ENCODE measurements at regions of chr10 and their contacts with region 1.

Region 1: DNA sequence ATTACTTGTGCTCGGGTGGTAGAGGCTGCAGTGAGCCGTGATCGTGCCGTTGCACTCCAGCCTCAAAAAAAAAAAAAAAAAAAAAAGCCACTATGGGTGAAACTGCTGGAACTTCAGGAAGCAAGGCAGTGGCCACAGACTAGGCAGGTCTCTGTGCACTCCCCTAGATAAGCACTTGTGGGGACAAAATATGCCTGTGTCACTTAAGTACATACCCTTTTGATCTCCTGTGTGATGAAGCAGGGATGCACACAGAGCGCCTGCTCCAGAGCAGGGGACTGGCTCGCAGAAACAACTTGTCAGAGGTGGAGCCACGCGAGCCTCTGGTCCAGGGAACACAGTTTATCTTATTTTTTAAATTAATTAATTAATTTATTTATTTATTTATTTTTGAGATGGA is 42.9 kb upstream of the PSAP start:
- DNase-seq: no peak
- H3K4me3 ChIP-seq: no peak overlapping the region
- H3K27ac ChIP-seq: no peak overlapping the region
- H3K4me1 ChIP-seq: peaks cover 0 to 3% of the 10 kb centered on the region in 2 experiments; a peak in 1 of 4 replicates
- H3K27me3 ChIP-seq: no peaks in the 10 kb centered on the region
- CTCF ChIP-seq: no peak
- EP300 ChIP-seq: no peak
- RAD21 ChIP-seq: no peak

Region 2: GRCh38 chr10:71173466-71173865 is 720.5 kb before region 1 on chr10:
- CTCF ChIA-PET with region 1: no interaction called
- POLR2A ChIA-PET with region 1: no interaction called
- DNase-seq: no peak
- H3K4me3 ChIP-seq: no peak overlapping the region
- H3K27ac ChIP-seq: no peak overlapping the region
- H3K4me1 ChIP-seq: no peaks in the 10 kb centered on the region; a peak in 1 of 4 replicates
- H3K27me3 ChIP-seq: peaks cover 16% of the 10 kb centered on the region; the same call in 1 of the 2 replicates
- CTCF ChIP-seq: no peak
- EP300 ChIP-seq: no peak
- RAD21 ChIP-seq: no peak

Region 3: GRCh38 chr10:71742301-71743088 is 151.4 kb before region 1 on chr10:
- CTCF ChIA-PET with region 1: interaction called, 10 read pairs
- POLR2A ChIA-PET with region 1: no interaction called
- DNase-seq: no peak
- H3K4me3 ChIP-seq: no peak overlapping the region
- H3K27ac ChIP-seq: no peak overlapping the region
- H3K4me1 ChIP-seq: peaks cover 0 to 33% of the 10 kb centered on the region in 2 experiments; a peak in 1 of 4 replicates
- H3K27me3 ChIP-seq: no peaks in the 10 kb centered on the region
- CTCF ChIP-seq: no peak
- EP300 ChIP-seq: no peak
- RAD21 ChIP-seq: no peak

Region 4: DNA sequence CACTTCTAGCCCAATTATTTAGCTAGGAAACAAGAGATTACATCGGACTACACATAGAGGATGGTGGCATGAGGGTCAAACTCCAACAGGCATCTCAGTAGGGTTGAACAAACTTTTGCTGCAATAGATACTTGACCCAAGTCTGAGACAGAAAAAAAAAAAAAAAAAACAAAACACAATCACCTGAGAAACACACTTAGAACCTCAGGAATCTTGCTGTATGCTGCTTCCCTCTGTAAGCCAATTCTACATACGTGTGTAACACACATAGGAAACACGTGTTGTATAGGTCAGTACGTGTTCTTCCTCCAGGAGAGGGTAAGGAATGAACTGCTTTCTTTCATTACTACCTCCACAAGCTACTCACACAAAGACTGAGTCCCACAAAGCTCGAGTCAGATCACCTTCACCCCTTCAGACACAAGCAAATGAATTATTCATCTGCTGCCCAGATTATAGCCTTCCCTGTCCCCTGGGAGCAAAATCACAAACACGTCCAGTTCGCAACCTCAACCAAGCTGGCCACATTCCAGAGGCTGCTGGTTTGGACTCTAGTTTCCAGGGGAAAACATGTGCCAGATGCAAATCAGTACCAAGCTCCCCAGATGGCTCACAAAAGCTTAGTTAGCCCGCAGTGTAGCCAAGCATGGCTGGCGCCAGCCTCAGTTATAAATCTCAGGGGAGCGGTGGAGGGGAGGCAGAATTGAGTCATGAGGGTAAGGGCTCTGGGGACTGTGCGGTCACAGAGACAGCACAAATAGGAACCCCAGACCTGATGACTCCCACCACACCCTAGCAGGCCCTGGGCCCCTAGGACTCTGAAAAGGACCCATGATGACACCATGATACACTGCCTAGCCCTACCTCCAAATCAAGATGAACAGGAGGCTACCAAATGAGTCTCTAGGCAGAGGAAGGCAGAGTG is 58.0 kb before region 1 on chr10:
- CTCF ChIA-PET with region 1: interaction called, 65 read pairs
- POLR2A ChIA-PET with region 1: no interaction called
- DNase-seq: peak; percentile 85
- H3K4me3 ChIP-seq: no peak overlapping the region
- H3K27ac ChIP-seq: peak overlapping the region; percentile 69 to 94
- H3K4me1 ChIP-seq: peaks cover 48 to 49% of the 10 kb centered on the region in 2 experiments
- H3K27me3 ChIP-seq: no peaks in the 10 kb centered on the region
- CTCF ChIP-seq: no peak
- EP300 ChIP-seq: peak; percentile 32 to 77; a peak in 2 of 4 replicates
- RAD21 ChIP-seq: peak; percentile 26; the same call in 1 of the 2 replicates

Region 5: GRCh38 chr10:71909399-71910083 is 15.6 kb after region 1 on chr10:
- CTCF ChIA-PET with region 1: interaction called, 28 read pairs
- POLR2A ChIA-PET with region 1: no interaction called
- DNase-seq: no peak
- H3K4me3 ChIP-seq: no peak overlapping the region
- H3K27ac ChIP-seq: no peak overlapping the region
- H3K4me1 ChIP-seq: no peaks in the 10 kb centered on the region
- H3K27me3 ChIP-seq: no peaks in the 10 kb centered on the region
- CTCF ChIP-seq: no peak
- EP300 ChIP-seq: no peak
- RAD21 ChIP-seq: no peak

Region 6: GRCh38 chr10:71999360-72000072 is 105.6 kb after region 1 on chr10:
- CTCF ChIA-PET with region 1: interaction called, 19 read pairs
- POLR2A ChIA-PET with region 1: interaction called, 4 read pairs
- DNase-seq: peak; percentile 91
- H3K4me3 ChIP-seq: no peak overlapping the region
- H3K27ac ChIP-seq: peak overlapping the region; percentile 80 to 90
- H3K4me1 ChIP-seq: peaks cover 19 to 38% of the 10 kb centered on the region in 2 experiments
- H3K27me3 ChIP-seq: no peaks in the 10 kb centered on the region
- CTCF ChIP-seq: no peak
- EP300 ChIP-seq: peak in 1 of 2 experiments; percentile 81; a peak in 2 of 4 replicates
- RAD21 ChIP-seq: no peak

Region 7: GRCh38 chr10:72223743-72224101 is 329.8 kb after region 1 on chr10:
- CTCF ChIA-PET with region 1: interaction called, 16 read pairs
- POLR2A ChIA-PET with region 1: no interaction called
- DNase-seq: no peak
- H3K4me3 ChIP-seq: no peak overlapping the region
- H3K27ac ChIP-seq: no peak overlapping the region
- H3K4me1 ChIP-seq: peaks cover 5% of the 10 kb centered on the region in 2 experiments; a peak in 2 of 4 replicates
- H3K27me3 ChIP-seq: no peaks in the 10 kb centered on the region
- CTCF ChIP-seq: no peak
- EP300 ChIP-seq: no peak
- RAD21 ChIP-seq: no peak